ENCODE measurements at regions of chr6 and their contacts with region 1.

Region 1: GRCh38 chr6:140441256-140441655 is 1066.8 kb upstream of the CITED2 start:
- DNase-seq: peak; percentile 46 to 73
- H3K4me3 ChIP-seq: no peak overlapping the region
- H3K27ac ChIP-seq: no peak overlapping the region
- H3K4me1 ChIP-seq: peaks cover 0 to 9% (median 3%) of the 10 kb centered on the region in 4 donors
- H3K27me3 ChIP-seq: no peaks in the 10 kb centered on the region
- CTCF ChIP-seq: peak in 4 of 7 experiments; percentile 6 to 43 (median 26)
- EP300 ChIP-seq: no peak
- POLR2A ChIP-seq: no peak

Region 2: DNA sequence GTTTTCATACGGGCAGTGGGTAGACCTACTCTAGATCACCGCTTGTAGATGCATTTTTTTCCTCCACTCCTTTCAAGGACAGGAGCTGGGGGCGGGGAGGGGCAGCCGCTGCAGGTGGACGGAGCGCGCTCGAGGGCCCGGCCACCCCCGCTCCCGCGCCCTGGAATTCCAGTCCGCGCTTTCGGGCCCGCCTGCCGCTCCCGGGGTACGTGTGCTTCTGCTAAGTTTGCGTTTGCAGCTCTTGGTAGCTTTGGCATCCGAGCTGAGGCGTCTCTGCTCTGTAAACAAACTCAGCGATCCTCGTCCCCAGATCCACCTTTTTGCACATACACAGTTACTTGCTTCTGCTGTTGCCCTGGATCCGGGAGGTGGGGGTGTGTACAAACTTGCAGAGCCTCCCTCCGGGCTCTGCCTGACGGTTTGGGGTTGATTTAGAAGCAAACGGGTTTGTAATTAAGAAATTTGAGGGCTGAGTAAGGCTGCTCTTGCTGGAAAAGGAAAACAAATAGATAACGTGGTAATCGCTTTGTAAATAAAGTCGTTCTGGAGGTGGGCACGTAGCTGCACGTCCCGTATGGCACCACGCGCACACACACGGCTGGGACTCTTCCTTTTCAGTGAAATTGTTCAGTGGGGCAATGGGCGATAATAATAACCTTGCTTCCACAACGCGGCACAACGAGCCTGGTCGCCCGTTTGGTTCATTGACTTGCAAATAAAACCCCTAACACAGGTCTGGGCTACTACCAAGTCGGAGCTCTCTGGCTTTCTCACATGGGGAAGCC is 1065.8 kb before region 1 on chr6:
- intact Hi-C with region 1: loop called (anchors 10 kb)
- DNase-seq: peak; percentile 92 to 97
- H3K4me3 ChIP-seq: peak overlapping the region; percentile 69 to 93 (median 83)
- H3K27ac ChIP-seq: peak overlapping the region; percentile 92 to 100 (median 97)
- H3K4me1 ChIP-seq: peaks cover 2 to 40% (median 29%) of the 10 kb centered on the region in 4 donors
- H3K27me3 ChIP-seq: no peaks in the 10 kb centered on the region
- CTCF ChIP-seq: no peak
- EP300 ChIP-seq: no peak
- POLR2A ChIP-seq: no peak

Region 3: DNA sequence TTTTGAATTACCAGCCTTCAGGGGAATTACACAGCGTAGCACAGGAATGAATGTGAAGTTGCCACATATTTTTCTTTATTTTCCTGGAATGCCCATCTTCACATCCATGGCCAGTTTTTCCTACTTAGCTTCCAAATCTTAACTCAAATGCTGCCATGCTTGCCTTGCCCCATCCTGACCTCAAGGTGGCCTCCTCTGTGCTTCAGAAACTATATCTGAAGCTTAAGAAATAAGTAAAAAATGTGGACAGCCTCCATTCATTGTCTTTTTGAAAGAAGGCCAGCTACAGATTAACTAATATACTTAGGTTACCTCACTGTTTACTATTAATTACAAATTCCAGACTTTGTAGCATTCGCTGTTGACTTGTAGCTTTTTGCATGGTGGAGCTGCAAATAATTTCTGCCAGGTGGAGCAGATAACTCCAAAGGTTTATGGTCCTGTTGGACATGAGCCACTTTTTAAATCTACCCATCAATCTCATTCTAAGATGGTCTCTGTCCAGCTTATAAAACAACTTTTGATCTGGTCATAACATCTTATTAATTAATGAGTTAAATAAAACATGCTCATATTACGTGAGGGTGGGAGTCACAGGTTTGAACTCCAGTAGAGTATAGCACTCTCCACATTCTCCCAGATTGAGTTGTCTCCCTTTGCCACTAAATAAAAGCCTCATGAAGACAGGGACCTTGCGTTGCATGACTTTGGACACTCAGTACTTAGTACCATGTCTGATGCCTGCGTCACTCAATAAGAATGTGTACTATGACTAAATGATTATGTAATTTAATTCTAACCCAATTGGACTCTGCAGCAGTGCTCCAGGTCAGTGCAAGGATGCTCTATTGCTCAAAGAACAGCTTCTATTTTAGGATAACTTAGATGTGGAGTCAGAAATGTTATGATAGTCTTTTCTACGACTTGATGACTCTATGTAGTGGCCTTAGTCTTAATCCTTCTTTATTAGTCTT is 388.2 kb before region 1 on chr6:
- intact Hi-C with region 1: no loop called
- DNase-seq: no peak
- H3K4me3 ChIP-seq: no peak overlapping the region
- H3K27ac ChIP-seq: no peak overlapping the region
- H3K4me1 ChIP-seq: no peaks in the 10 kb centered on the region
- H3K27me3 ChIP-seq: no peaks in the 10 kb centered on the region
- CTCF ChIP-seq: no peak
- EP300 ChIP-seq: no peak
- POLR2A ChIP-seq: no peak

Region 4: DNA sequence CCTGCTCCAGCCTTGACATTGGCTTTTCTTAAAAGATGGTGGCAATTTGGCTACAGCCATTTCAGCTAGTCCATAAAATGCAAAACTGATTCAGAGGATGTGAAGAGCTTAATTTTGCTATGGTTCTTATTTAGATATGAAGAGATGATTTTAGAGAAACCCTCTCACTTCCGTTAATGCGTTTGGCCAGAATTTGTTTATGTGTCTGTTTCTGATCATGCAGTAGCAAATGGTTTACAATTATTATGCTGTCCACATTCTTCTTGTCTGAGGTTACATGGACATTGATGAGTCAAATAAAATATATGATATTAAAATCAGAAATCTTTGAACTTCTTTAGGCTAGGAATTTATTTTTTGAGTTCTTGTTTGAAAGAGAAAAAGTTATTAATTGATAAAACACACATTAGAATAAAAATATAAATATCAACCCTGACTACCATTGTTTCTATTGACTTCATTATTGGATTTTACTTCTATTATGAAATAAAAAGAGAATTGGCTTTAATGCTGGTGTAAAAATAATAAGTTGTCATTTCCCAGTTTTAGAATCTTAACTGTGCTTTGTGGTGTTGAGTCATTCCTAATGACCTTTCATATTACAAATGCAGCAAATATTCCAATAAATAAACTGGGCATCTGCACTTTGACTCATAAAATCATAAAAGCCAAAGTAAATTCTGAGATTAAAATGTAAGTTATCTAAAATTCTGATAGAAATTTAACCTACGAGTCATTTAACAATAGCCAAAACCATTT is 405.4 kb after region 1 on chr6:
- intact Hi-C with region 1: no loop called
- DNase-seq: no peak
- H3K4me3 ChIP-seq: no peak overlapping the region
- H3K27ac ChIP-seq: no peak overlapping the region
- H3K4me1 ChIP-seq: no peaks in the 10 kb centered on the region
- H3K27me3 ChIP-seq: no peaks in the 10 kb centered on the region
- CTCF ChIP-seq: no peak
- EP300 ChIP-seq: no peak
- POLR2A ChIP-seq: no peak

Measured in stomach (tissue), 19 donors.